ENCODE measurements at regions of chr2 and their contacts with region 1.

Region 1: GRCh38 chr2:238320246-238320647 is at the start of gene TRAF3IP1:
- DNase-seq: peak; percentile 42
- ATAC-seq: peak; percentile 98
- H3K4me3 ChIP-seq: peak within 1 kb of the TSS; percentile 62 to 64
- H3K27ac ChIP-seq: peak within 1 kb of the TSS; percentile 73
- H3K4me1 ChIP-seq: peaks cover 9% of the 10 kb centered on the region; the same call in 1 of the 2 replicates
- H3K27me3 ChIP-seq: no peaks in the 10 kb centered on the region
- CTCF ChIP-seq: no peak
- total RNA-seq, gene TRAF3IP1: 23.4 TPM

Region 2: DNA sequence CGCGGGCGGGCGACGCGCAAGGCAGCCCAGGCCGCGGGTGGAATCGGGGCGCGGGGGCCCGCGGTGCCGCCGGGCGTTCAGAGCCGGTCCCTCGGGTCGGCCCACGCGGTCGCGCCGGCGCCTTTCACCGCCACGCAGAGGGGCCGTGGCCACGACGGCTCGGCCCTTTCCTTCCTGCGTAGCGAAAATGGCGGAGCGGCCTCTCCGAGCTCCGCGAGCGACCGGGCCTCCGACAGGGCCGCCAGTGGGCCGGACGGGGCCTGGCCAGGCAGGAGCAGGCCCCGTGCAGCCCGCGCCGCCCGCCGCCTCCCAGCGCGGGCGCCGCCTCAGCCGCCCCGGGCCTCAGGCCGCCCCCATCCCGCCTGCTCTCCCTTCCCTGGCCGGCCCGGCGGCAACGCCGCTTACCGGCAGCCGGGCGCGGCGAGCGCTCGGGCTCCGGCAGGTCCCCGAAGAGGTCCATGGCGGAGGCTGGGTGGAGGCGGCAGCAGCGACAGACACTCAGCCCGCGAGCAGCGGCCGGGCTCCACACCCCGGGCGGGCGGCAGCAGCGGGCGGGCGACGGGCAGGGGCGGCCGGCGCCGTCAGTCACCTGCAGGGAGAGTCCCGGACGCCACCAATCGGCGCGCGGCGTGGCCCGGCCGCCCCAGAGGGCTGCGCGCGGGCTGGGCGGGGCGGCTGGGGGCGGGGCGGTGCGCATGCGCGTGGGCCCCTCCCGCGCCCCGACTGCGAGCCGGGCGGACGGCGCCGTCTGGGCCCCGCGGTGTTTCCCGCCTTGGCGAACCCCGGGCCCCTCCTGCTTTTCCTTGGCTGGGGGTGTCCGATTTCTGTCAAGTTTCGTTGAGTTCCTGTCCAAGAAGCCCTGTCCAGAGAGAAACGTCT is 116.9 kb before region 1 on chr2 and contains the start of gene ILKAP:
- CTCF ChIA-PET with region 1: no interaction called
- POLR2A ChIA-PET with region 1: no interaction called
- in situ Hi-C with region 1: no loop called
- intact Hi-C with region 1: no loop called
- DNase-seq: no peak
- ATAC-seq: peak; percentile 99
- H3K4me3 ChIP-seq: peak within 1 kb of the TSS; percentile 69 to 97
- H3K27ac ChIP-seq: peak within 1 kb of the TSS; percentile 99
- H3K4me1 ChIP-seq: peaks cover 28% of the 10 kb centered on the region
- H3K27me3 ChIP-seq: no peaks in the 10 kb centered on the region
- CTCF ChIP-seq: no peak
- total RNA-seq, gene ILKAP: 49.9 TPM

Region 3: DNA sequence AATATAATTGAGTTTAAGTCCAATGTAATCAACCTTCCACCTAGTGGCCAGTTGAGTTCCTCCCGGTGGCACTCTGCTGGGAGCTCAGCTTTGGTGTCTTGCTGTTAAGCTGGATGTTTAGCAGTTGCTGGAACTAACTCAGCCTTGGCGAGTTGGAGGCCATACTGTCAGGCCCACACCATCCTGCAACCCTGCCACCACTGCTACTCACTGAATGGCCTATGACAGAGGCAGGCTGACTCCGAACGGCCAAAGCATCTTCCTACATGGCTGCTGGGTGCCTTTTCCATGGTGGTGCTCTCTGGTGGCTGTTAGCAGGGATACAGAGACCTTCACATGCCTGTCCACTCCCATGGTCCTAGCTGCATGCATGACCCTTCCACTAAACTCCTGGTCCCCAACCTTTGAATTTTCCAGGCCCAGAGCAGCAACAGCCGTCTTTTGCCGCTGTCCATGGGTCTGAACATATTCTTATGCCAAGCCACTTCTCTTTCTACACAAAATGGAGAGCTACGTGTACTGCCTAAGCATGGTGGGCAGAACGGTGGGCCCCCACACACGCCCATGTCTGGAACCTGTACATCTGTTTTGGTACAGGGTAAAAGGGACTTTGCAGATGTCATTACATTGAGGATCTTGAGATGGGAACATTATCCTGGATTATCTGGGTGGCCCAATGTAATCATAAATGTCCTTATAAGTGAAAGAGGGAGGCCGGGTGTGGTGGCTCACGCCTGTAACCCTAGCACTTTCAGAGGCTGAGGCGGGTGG is 15.0 kb before region 1 on chr2:
- CTCF ChIA-PET with region 1: interaction called, 13 read pairs
- POLR2A ChIA-PET with region 1: no interaction called
- in situ Hi-C with region 1: no loop called
- intact Hi-C with region 1: no loop called
- DNase-seq: no peak
- ATAC-seq: peak; percentile 62
- H3K4me3 ChIP-seq: no peak overlapping the region
- H3K27ac ChIP-seq: no peak overlapping the region
- H3K4me1 ChIP-seq: no peaks in the 10 kb centered on the region
- H3K27me3 ChIP-seq: no peaks in the 10 kb centered on the region
- CTCF ChIP-seq: peak; percentile 55; the same call in 1 of the 2 replicates

Region 4: GRCh38 chr2:238379096-238379810 is 59.0 kb after region 1 on chr2:
- CTCF ChIA-PET with region 1: no interaction called
- POLR2A ChIA-PET with region 1: no interaction called
- in situ Hi-C with region 1: no loop called
- intact Hi-C with region 1: no loop called
- DNase-seq: no peak
- ATAC-seq: no peak; the same call in 1 of the 2 replicates
- H3K4me3 ChIP-seq: no peak overlapping the region
- H3K27ac ChIP-seq: no peak overlapping the region
- H3K4me1 ChIP-seq: no peaks in the 10 kb centered on the region
- H3K27me3 ChIP-seq: no peaks in the 10 kb centered on the region
- CTCF ChIP-seq: no peak

Region 5: DNA sequence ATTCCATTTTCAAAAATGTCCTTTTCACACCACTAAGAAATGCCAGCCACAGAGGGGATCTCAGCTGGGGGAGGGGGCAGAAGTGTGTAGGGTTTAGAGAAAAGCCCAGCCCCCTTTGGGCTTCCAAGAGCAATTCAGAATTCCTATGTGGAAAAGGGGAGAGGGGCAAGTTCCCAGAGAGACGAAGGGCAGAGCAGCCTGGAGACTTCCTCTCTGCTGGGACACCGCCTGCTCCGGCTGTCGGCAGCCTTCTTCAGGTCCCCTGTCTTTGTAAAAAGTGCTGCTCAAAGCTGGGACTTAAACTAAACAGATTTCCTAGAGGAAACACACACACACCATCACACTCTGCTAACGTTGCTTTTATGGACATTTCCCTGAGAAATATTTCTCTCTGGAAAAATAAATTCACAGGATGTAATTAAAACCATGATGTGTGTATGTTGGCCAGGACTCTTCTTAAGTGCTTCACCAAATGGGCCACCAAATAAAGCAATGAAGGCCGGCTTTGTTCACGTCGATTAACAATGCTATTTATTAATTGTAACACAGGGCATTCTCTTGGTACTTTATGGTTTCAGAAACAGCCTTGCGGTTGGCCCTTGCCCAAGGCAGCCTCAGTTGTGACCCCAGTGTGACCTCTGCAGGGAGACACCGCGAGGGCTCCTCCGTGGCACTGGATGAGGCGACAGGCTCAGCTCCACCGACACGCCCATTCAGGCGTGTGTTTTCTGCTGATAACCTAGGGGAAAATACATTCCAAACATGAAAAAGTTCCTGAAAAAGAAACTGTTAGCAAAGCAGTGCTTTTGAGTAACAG is 100.8 kb after region 1 on chr2:
- CTCF ChIA-PET with region 1: no interaction called
- POLR2A ChIA-PET with region 1: no interaction called
- in situ Hi-C with region 1: no loop called
- intact Hi-C with region 1: no loop called
- DNase-seq: no peak
- ATAC-seq: no peak
- H3K4me3 ChIP-seq: no peak overlapping the region
- H3K27ac ChIP-seq: no peak overlapping the region
- H3K4me1 ChIP-seq: peaks cover 11% of the 10 kb centered on the region
- H3K27me3 ChIP-seq: no peaks in the 10 kb centered on the region
- CTCF ChIP-seq: no peak

Region 6: GRCh38 chr2:238498691-238499295 is 178.5 kb after region 1 on chr2:
- CTCF ChIA-PET with region 1: no interaction called
- POLR2A ChIA-PET with region 1: no interaction called
- in situ Hi-C with region 1: no loop called
- intact Hi-C with region 1: no loop called
- DNase-seq: no peak
- ATAC-seq: no peak
- H3K4me3 ChIP-seq: no peak overlapping the region
- H3K27ac ChIP-seq: no peak overlapping the region
- H3K4me1 ChIP-seq: no peaks in the 10 kb centered on the region
- H3K27me3 ChIP-seq: no peaks in the 10 kb centered on the region
- CTCF ChIP-seq: no peak

Measured in Panc1 (cell line).